ENCODE measurements at regions of chr20 and their contacts with region 1.

Region 1: DNA sequence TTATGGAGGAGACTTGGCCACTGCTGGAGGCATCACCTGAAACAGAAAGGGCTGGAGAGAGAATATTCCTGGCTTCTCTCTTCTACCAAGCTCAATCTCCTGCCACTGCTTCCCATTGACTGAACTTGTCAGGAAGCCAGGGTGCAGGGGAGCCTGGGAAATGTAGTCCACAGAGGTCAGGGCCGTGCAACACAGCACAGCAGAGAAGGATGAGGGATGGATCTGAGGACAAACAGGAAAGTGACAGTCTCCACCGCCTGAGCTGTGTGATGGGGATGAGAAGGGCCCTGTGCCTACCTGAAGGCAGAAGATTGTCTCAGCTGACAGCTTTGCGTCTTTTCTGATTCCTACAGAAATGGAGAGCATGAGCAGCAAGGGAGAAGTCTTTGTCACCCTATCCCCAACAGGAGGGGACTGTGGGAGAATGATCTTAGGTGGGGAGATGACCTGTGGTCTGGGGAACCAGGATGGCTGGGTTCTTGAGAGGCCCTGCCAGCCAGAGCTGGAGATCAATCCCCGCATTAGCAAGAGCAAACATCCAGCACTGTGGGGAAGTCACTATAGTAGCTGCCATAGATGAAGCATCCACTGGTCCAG is 114.2 kb downstream of the SNX5 start:
- DNase-seq: peak in 1 of 2 experiments; percentile 25
- H3K4me3 ChIP-seq: no peak overlapping the region
- H3K27ac ChIP-seq: no peak overlapping the region
- H3K4me1 ChIP-seq: peaks cover 14% of the 10 kb centered on the region; the same call in 1 of the 2 replicates
- H3K27me3 ChIP-seq: no peaks in the 10 kb centered on the region
- CTCF ChIP-seq: no peak

Region 2: GRCh38 chr20:17747431-17747867 is 107.0 kb before region 1 on chr20:
- CTCF ChIA-PET with region 1: no interaction called
- POLR2A ChIA-PET with region 1: no interaction called
- intact Hi-C with region 1: loop called (anchors 5 kb)
- DNase-seq: peak; percentile 58 to 68
- H3K4me3 ChIP-seq: no peak overlapping the region; the same call in 1 of the 2 replicates
- H3K27ac ChIP-seq: no peak overlapping the region
- H3K4me1 ChIP-seq: peaks cover 5% of the 10 kb centered on the region; the same call in 1 of the 2 replicates
- H3K27me3 ChIP-seq: peaks cover 22% of the 10 kb centered on the region; the same call in 1 of the 2 replicates
- CTCF ChIP-seq: no peak

Region 3: DNA sequence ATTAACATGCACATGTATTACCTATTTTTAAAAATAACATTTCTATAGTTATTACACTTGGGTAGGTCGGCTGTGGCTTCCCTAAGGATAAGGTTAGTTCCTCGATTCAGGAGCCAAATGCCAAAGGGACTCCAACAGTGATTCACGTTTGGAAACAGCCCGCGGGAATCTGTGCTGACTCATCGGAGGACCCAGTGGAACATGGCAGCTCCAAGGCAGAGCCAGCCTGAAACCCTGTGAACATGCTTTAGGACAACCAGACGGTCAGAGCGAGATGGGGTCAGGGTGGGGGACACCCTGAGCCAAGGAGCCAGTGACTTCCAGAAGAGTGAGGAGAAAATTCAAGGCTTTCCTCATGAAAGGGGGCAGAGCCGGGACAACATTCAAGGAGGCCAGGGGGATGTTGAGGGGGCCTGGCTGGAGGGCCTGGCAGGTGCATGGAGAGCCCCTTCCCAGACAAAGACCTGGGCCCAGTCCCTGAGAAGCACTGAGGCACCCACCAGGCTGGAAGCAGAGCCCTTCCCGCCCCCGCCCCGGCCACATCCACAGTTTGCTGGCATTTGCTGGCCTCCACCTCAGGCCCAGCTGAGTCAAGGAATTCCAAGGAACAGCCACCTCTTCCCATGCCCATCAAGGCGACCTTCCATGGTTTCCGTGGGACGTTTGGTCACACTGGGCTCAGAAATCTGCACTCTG is 19.0 kb before region 1 on chr20:
- CTCF ChIA-PET with region 1: no interaction called
- POLR2A ChIA-PET with region 1: no interaction called
- intact Hi-C with region 1: no loop called
- DNase-seq: peak; percentile 54
- H3K4me3 ChIP-seq: no peak overlapping the region
- H3K27ac ChIP-seq: no peak overlapping the region
- H3K4me1 ChIP-seq: peaks cover 8% of the 10 kb centered on the region; the same call in 1 of the 2 replicates
- H3K27me3 ChIP-seq: no peaks in the 10 kb centered on the region
- CTCF ChIP-seq: no peak

Region 4: DNA sequence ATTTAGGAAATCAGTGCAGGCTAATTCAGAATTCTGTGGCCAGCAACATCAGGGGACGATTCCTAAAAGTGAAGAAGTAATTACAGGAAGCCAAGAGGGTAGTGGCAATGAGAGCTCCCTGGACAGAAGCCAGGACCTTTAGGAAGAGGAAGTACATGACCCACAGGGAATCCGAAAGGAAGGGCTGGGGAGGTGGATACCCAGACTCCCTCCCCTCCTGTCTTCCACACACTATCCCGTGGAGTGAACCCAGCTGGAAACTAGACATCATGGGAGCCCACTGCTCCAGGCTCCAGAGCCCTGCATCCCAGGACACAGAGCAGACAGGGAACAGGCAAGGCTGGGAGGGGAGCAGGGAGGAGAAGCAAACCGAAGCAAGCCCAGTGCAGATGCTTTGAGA is 31.1 kb after region 1 on chr20:
- CTCF ChIA-PET with region 1: no interaction called
- POLR2A ChIA-PET with region 1: no interaction called
- intact Hi-C with region 1: loop called (anchors 5 kb)
- DNase-seq: no peak
- H3K4me3 ChIP-seq: no peak overlapping the region
- H3K27ac ChIP-seq: no peak overlapping the region
- H3K4me1 ChIP-seq: no peaks in the 10 kb centered on the region
- H3K27me3 ChIP-seq: no peaks in the 10 kb centered on the region
- CTCF ChIP-seq: no peak

Measured in PC-9 (cell line).